Ascending aorta (tissue), 2 donors: ENCODE measurements at regions of chr22 and their contacts with region 1.

Region 1: GRCh38 chr22:39117585-39118191 is 20.6 kb downstream of the APOBEC3H start:
- DNase-seq: no peak
- H3K4me3 ChIP-seq: no peak overlapping the region
- H3K27ac ChIP-seq: no peak overlapping the region
- H3K4me1 ChIP-seq: no peaks in the 10 kb centered on the region
- H3K27me3 ChIP-seq: no peaks in the 10 kb centered on the region
- CTCF ChIP-seq: peak in 2 of 3 experiments; percentile 5 to 28

Region 2: GRCh38 chr22:38862375-38863329 is 255.0 kb before region 1 on chr22:
- intact Hi-C with region 1: loop called (anchors 2 kb)
- DNase-seq: peak in 1 of 2 donors; percentile 85
- H3K4me3 ChIP-seq: no peak overlapping the region
- H3K27ac ChIP-seq: no peak overlapping the region
- H3K4me1 ChIP-seq: peaks cover 20 to 50% of the 10 kb centered on the region in 2 donors
- H3K27me3 ChIP-seq: no peaks in the 10 kb centered on the region
- CTCF ChIP-seq: no peak